HEK293 (cell line): ENCODE measurements at regions of chr10 and their contacts with region 1.

Region 1: DNA sequence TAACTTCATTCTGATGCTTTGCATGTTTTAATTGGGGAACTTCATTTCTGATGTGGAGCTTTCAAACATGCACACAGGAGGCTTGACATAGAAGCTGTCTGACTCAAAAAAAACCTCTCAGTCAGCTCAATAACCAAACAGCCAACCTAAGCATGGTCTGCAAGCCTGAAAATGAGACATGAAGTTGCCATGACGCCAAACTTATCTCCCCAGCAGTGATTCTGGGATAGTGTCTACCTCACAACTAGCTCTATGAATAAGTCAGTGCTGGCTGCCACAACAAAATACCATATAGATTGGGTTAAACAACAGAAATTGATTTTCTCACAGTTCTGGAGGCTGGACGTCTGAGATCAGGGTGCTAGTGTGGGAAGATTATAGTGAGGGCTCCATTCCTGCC is 244.2 kb downstream of the CCDC3 start:
- H3K4me3 ChIP-seq: no peak overlapping the region
- H3K27ac ChIP-seq: no peak overlapping the region
- H3K4me1 ChIP-seq: no peaks in the 10 kb centered on the region
- CTCF ChIP-seq: no peak

Region 2: GRCh38 chr10:12638103-12638502 is 119.2 kb before region 1 on chr10:
- CTCF ChIA-PET with region 1: no interaction called
- POLR2A ChIA-PET with region 1: no interaction called
- H3K4me3 ChIP-seq: no peak overlapping the region
- H3K27ac ChIP-seq: no peak overlapping the region
- H3K4me1 ChIP-seq: peaks cover 8% of the 10 kb centered on the region
- CTCF ChIP-seq: no peak

Region 3: GRCh38 chr10:12993595-12993994 is 236.2 kb after region 1 on chr10:
- CTCF ChIA-PET with region 1: interaction called, 10 read pairs
- POLR2A ChIA-PET with region 1: no interaction called
- H3K4me3 ChIP-seq: no peak overlapping the region
- H3K27ac ChIP-seq: no peak overlapping the region
- H3K4me1 ChIP-seq: no peaks in the 10 kb centered on the region
- CTCF ChIP-seq: no peak